Adrenal gland (tissue), 19 donors: ENCODE measurements at regions of chr14 and their contacts with region 1.

Region 1: GRCh38 chr14:87896393-87897380 is 96.3 kb downstream of the GALC start:
- DNase-seq: peak in 6 of 7 donors; percentile 26 to 64 (median 41)
- H3K4me3 ChIP-seq: no peak overlapping the region
- H3K27ac ChIP-seq: peak overlapping the region in 4 of 5 donors; percentile 28 to 81 (median 60)
- H3K4me1 ChIP-seq: peaks cover 6% of the 10 kb centered on the region in 2 donors
- H3K27me3 ChIP-seq: no peaks in the 10 kb centered on the region
- CTCF ChIP-seq: peak; percentile 53 to 85 (median 78)
- POLR2A ChIP-seq: no peak

Region 2: DNA sequence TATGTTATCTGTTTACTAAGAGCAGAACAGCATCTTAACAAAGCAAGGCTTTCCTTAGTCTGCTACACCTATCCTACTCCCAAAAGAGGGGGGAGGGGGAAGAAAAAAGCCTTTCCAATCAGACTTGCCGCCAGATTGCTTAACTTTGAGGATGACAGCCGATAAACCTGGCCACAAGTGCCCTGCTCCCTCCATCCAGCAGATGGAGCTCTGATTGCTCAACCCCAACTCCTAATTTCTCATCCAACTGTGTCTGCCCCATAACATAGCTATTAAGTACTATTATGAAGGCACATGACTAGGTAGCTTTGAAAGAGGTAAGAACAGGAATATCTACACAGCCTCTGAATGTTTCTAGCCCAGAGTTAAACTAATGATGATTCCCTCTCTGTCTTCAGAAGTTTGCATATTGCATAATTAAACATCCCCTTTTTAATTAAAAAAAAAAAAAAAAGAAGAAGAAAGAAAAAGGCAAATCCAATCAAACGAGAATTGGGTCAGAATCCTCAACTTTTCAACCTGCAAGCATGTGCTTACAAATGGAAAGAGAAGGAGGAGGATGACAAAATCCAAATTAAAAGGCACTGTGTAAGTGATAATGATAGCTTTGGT is 151.1 kb before region 1 on chr14:
- intact Hi-C with region 1: loop called (anchors 5 to 10 kb)
- DNase-seq: peak; percentile 29 to 60 (median 47)
- H3K4me3 ChIP-seq: no peak overlapping the region
- H3K27ac ChIP-seq: no peak overlapping the region
- H3K4me1 ChIP-seq: no peaks in the 10 kb centered on the region
- H3K27me3 ChIP-seq: no peaks in the 10 kb centered on the region
- CTCF ChIP-seq: peak; percentile 40 to 71 (median 56)
- POLR2A ChIP-seq: no peak

Region 3: GRCh38 chr14:87805315-87805723 is 91.4 kb before region 1 on chr14:
- intact Hi-C with region 1: loop called in 1 of 2 experiments (anchors 5 kb)
- DNase-seq: peak; percentile 48 to 72 (median 55)
- H3K4me3 ChIP-seq: no peak overlapping the region
- H3K27ac ChIP-seq: no peak overlapping the region
- H3K4me1 ChIP-seq: no peaks in the 10 kb centered on the region
- H3K27me3 ChIP-seq: no peaks in the 10 kb centered on the region
- CTCF ChIP-seq: peak; percentile 66 to 86 (median 73)
- POLR2A ChIP-seq: no peak